ENCODE measurements at regions of chr2 and their contacts with region 1.

Region 1: DNA sequence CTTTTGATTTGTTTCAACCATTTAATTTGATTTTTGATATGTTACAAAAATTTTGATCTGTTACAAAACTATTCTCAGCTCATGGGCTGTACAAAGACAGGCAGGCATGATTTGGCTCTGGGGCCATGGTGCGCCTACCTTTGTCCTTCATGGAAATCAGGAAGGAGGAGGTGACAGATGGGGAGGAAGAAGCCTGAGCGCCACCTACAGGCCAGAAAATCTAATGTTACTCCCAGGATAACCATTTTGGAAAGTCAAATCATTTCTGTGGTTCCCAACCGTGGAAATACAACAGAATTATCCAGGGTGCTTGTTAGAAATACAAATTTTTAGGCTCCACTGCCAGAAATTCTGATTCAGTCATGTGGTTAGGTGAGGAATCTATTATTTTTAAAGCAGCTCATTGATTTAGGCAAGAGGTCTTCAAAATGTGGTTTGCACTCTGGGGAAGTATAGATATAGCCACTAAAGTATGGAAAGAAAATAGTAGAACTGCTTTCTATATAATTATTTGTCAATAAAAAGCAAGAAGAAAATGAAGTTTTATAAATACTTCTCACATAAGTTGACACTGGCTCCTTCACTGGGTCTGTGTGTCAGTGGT is 93.9 kb downstream of the EVA1A start:
- DNase-seq: peak; percentile 49 to 58
- H3K4me3 ChIP-seq: no peak overlapping the region
- H3K4me3 Mint-ChIP-seq: no peak overlapping the region
- H3K27ac Mint-ChIP-seq: no peak overlapping the region
- H3K4me1 ChIP-seq: no peaks in the 10 kb centered on the region
- H3K4me1 Mint-ChIP-seq: no peaks in the 10 kb centered on the region
- H3K27me3 ChIP-seq: no peaks in the 10 kb centered on the region
- H3K27me3 Mint-ChIP-seq: peaks cover 13% of the 10 kb centered on the region
- CTCF ChIP-seq: peak; percentile 45 to 60

Region 2: DNA sequence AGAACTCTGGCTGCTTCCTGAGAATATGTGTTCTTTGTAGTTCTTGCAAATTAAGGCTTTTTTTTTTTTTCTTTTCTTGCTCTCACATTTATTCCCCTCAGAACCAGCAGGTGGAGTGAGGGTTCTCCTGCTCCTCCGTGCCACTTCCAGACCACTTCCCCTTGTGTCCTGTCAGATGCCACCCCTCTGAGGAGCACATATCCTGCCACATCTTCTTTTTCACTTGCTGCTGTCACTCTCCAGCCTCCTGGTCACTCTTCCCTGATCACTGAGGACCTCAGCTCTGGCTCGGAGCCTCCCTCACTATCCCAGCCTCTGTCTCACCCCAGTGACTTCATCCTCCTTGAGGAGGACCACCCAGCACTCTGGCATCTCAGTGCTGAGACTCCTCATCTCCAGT is 368.0 kb before region 1 on chr2:
- CTCF ChIA-PET with region 1: no interaction called
- POLR2A ChIA-PET with region 1: no interaction called
- intact Hi-C with region 1: no loop called
- DNase-seq: peak in 1 of 2 experiments; percentile 30
- H3K4me3 ChIP-seq: no peak overlapping the region
- H3K4me3 Mint-ChIP-seq: no peak overlapping the region
- H3K27ac Mint-ChIP-seq: no peak overlapping the region
- H3K4me1 ChIP-seq: peaks cover 13% of the 10 kb centered on the region
- H3K4me1 Mint-ChIP-seq: peaks cover 34% of the 10 kb centered on the region
- H3K27me3 ChIP-seq: no peaks in the 10 kb centered on the region
- H3K27me3 Mint-ChIP-seq: no peaks in the 10 kb centered on the region
- CTCF ChIP-seq: peak; percentile 44 to 51

Region 3: GRCh38 chr2:75480971-75481836 is 14.4 kb after region 1 on chr2:
- CTCF ChIA-PET with region 1: no interaction called
- POLR2A ChIA-PET with region 1: no interaction called
- intact Hi-C with region 1: loop called (anchors 2 kb)
- DNase-seq: no peak
- H3K4me3 ChIP-seq: no peak overlapping the region
- H3K4me3 Mint-ChIP-seq: no peak overlapping the region
- H3K27ac Mint-ChIP-seq: no peak overlapping the region
- H3K4me1 ChIP-seq: no peaks in the 10 kb centered on the region
- H3K4me1 Mint-ChIP-seq: no peaks in the 10 kb centered on the region
- H3K27me3 ChIP-seq: no peaks in the 10 kb centered on the region
- H3K27me3 Mint-ChIP-seq: peaks cover 20% of the 10 kb centered on the region
- CTCF ChIP-seq: peak; percentile 37 to 55

Region 4: DNA sequence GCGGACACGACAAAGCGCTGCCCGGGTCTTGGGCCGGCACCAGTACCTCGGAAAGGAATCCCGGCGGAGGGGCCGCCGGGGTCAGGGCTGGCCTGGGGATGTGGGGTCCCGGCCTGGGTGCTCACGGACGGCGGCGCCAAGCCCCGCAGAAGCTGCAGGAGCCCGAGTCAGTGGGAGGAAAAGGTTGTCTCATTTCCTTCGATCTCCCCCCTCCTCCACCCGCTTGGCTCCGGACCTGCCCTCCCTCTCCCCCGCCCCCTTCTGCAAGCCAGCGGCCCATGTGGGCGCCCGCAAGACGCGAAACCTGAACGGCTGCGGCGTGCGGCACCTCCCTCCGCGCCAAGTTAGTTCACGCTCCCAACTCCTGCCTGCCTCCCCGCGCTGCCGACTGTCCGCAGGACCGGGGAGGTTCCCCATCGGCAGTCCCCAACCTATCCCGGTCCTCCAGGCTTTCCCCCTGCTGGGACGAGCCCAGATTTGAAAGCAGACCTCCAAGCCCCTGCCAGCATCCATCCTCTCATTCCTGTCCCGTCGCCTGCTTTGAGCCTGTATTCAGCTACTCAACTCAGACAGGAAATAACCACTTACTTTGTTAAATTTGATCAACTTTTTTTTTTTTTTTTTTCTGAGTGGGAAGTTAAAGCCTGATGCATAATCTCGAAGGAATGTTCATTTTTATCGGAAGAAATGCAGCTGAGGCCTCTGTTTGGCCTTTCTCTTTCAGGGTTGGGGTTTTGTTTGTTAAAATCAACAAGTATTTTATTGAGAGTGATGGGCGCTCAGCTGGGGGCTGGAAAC is 94.2 kb after region 1 on chr2 and contains the start of gene EVA1A:
- CTCF ChIA-PET with region 1: no interaction called
- POLR2A ChIA-PET with region 1: no interaction called
- intact Hi-C with region 1: loop called (anchors 5 kb)
- DNase-seq: peak; percentile 30 to 50
- H3K4me3 ChIP-seq: peak within 1 kb of the TSS; percentile 45
- H3K4me3 Mint-ChIP-seq: peak within 1 kb of the TSS; percentile 80
- H3K27ac Mint-ChIP-seq: no peak within 1 kb of the TSS
- H3K4me1 ChIP-seq: peaks cover 4% of the 10 kb centered on the region; the same call in 1 of the 2 replicates
- H3K4me1 Mint-ChIP-seq: peaks cover 16% of the 10 kb centered on the region
- H3K27me3 ChIP-seq: peaks cover 2% of the 10 kb centered on the region
- H3K27me3 Mint-ChIP-seq: peaks cover 12% of the 10 kb centered on the region
- CTCF ChIP-seq: no peak
- total RNA-seq, gene EVA1A: 0.25 and 0.53 TPM in 2 replicates

Region 5: DNA sequence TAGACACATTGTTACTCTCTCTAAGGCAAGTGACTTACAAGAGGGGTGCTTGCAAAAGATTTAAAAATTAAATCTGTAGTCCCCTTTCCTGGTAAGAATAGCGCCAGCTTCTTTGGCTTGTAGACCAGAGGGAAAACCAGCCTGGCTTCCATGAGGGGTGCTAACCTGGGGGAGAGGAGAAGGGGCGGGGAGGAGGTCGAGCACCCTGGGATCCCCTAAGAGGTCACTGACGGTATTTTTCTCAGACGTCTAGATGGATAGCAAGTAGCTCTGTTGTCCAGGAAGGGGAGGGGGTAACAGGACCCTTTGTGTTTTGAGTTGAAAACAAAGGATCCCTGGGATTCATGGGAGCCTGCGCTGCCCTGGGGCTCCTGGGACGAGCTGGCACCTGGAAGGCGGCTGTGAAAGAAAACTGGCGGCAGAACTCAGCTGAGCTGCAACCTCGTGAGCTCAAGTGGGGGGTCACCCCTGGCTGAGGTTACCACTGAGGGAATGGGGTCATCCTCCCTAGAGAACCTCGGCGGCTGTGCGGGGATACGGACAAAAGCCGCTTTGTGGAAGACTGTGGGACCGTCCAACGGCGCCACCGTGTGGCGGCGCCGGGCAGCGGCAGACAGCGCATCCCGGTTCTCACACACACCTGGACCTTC is 142.0 kb after region 1 on chr2:
- CTCF ChIA-PET with region 1: interaction called, 6 read pairs
- POLR2A ChIA-PET with region 1: no interaction called
- intact Hi-C with region 1: loop called (anchors 1 kb)
- DNase-seq: peak; percentile 64 to 74
- H3K4me3 ChIP-seq: peak overlapping the region; percentile 22
- H3K4me3 Mint-ChIP-seq: peak overlapping the region; percentile 38
- H3K27ac Mint-ChIP-seq: no peak overlapping the region
- H3K4me1 ChIP-seq: peaks cover 11% of the 10 kb centered on the region; the same call in 1 of the 2 replicates
- H3K4me1 Mint-ChIP-seq: peaks cover 9% of the 10 kb centered on the region
- H3K27me3 ChIP-seq: no peaks in the 10 kb centered on the region; the same call in 1 of the 2 replicates
- H3K27me3 Mint-ChIP-seq: peaks cover 20% of the 10 kb centered on the region
- CTCF ChIP-seq: peak; percentile 91 to 96

Region 6: DNA sequence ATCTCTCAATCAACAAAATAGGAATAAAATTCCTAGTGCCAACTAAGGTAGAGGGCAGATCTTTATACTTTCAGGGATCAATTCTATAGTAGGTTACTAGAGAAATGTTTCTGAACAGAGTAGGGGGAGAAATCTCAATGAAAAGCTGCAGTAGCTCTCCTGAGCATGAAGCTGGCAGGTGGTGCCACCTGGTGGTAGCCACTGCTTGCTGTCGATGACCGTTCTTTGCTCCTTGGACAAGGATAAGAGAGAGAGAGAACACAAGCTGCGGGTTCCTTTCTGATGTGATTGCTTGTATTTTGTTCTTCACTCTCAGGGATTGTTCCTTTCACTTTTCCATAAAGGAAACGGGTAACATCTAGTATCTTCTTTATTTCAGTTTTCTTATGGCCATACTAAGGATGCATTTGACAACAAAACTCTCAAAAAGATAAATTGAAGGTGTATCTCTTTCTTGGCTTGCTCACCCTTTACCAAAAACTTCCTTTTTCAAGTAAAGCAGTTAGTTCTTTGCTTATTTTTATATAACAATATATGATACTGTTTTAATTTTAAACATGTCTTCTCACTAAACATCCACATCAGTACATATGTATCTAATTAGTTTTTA is 161.2 kb after region 1 on chr2:
- CTCF ChIA-PET with region 1: interaction called, 16 read pairs
- POLR2A ChIA-PET with region 1: no interaction called
- intact Hi-C with region 1: loop called (anchors 1 kb)
- DNase-seq: peak; percentile 77 to 86
- H3K4me3 ChIP-seq: no peak overlapping the region
- H3K4me3 Mint-ChIP-seq: no peak overlapping the region
- H3K27ac Mint-ChIP-seq: no peak overlapping the region
- H3K4me1 ChIP-seq: no peaks in the 10 kb centered on the region
- H3K4me1 Mint-ChIP-seq: peaks cover 9% of the 10 kb centered on the region
- H3K27me3 ChIP-seq: no peaks in the 10 kb centered on the region
- H3K27me3 Mint-ChIP-seq: peaks cover 10% of the 10 kb centered on the region
- CTCF ChIP-seq: peak; percentile 91 to 97

Measured in Caco-2 (cell line).